Endothelial cell of umbilical vein (primary cell): ENCODE measurements at regions of chr5 and their contacts with region 1.

Region 1: GRCh38 chr5:57137401-57137800 is 36.5 kb upstream of the GPBP1 start:
- DNase-seq: no peak
- H3K4me3 ChIP-seq: no peak overlapping the region
- H3K27ac ChIP-seq: no peak overlapping the region
- H3K4me1 ChIP-seq: no peaks in the 10 kb centered on the region
- H3K27me3 ChIP-seq: no peaks in the 10 kb centered on the region
- CTCF ChIP-seq: no peak
- POLR2A ChIP-seq: no peak

Region 2: GRCh38 chr5:56900858-56901578 is 236.4 kb before region 1 on chr5:
- CTCF ChIA-PET with region 1: interaction called, 74 read pairs
- POLR2A ChIA-PET with region 1: no interaction called
- dilution Hi-C with region 1: no loop called
- intact Hi-C with region 1: loop called (anchors 1 kb)
- DNase-seq: peak; percentile 57
- H3K4me3 ChIP-seq: no peak overlapping the region
- H3K27ac ChIP-seq: no peak overlapping the region
- H3K4me1 ChIP-seq: peaks cover 5% of the 10 kb centered on the region
- H3K27me3 ChIP-seq: peaks cover 3 to 6% of the 10 kb centered on the region in 2 experiments
- CTCF ChIP-seq: peak; percentile 53 to 57
- POLR2A ChIP-seq: no peak

Region 3: GRCh38 chr5:56951946-56952691 is 185.3 kb before region 1 on chr5 and contains the start of gene MIER3:
- CTCF ChIA-PET with region 1: interaction called, 14 read pairs
- POLR2A ChIA-PET with region 1: no interaction called
- dilution Hi-C with region 1: no loop called
- intact Hi-C with region 1: no loop called
- DNase-seq: peak; percentile 71
- H3K4me3 ChIP-seq: peak within 1 kb of the TSS; percentile 72 to 82 (median 77)
- H3K27ac ChIP-seq: peak within 1 kb of the TSS; percentile 49
- H3K4me1 ChIP-seq: peaks cover 12% of the 10 kb centered on the region
- H3K27me3 ChIP-seq: peaks cover 15 to 24% of the 10 kb centered on the region in 2 experiments
- CTCF ChIP-seq: no peak
- POLR2A ChIP-seq: no peak
- total RNA-seq, gene MIER3: 20.5 and 21.9 TPM in 2 replicates

Region 4: GRCh38 chr5:57221049-57221568 is 83.7 kb after region 1 on chr5:
- CTCF ChIA-PET with region 1: interaction called, 22 read pairs
- POLR2A ChIA-PET with region 1: no interaction called
- dilution Hi-C with region 1: no loop called
- intact Hi-C with region 1: loop called (anchors 1 kb)
- DNase-seq: peak; percentile 83
- H3K4me3 ChIP-seq: no peak overlapping the region
- H3K27ac ChIP-seq: no peak overlapping the region
- H3K4me1 ChIP-seq: peaks cover 3% of the 10 kb centered on the region
- H3K27me3 ChIP-seq: no peaks in the 10 kb centered on the region
- CTCF ChIP-seq: peak; percentile 38 to 45
- POLR2A ChIP-seq: no peak

Region 5: DNA sequence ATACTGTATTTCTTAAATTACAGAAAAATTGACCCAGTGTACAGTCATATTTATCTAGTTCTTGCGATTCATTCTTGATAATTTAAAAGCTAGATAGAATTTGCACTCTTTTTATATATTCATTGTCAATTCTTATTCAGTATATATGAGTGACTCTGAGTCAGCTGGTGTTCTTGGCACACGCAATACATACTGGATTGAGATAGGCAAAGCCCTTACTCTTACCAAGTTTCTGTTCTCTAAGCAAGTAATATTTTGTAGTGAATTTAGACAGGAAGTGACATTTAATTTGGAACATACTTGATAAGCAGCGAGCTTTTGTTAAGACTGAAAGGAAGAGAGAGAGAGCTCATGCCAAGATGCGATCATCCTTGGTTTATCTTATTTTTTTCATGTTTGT is 94.2 kb after region 1 on chr5:
- CTCF ChIA-PET with region 1: interaction called, 11 read pairs
- POLR2A ChIA-PET with region 1: no interaction called
- dilution Hi-C with region 1: no loop called
- intact Hi-C with region 1: no loop called
- DNase-seq: peak; percentile 37
- H3K4me3 ChIP-seq: no peak overlapping the region
- H3K27ac ChIP-seq: peak overlapping the region; percentile 40
- H3K4me1 ChIP-seq: peaks cover 10% of the 10 kb centered on the region
- H3K27me3 ChIP-seq: no peaks in the 10 kb centered on the region
- CTCF ChIP-seq: no peak
- POLR2A ChIP-seq: no peak

Region 6: DNA sequence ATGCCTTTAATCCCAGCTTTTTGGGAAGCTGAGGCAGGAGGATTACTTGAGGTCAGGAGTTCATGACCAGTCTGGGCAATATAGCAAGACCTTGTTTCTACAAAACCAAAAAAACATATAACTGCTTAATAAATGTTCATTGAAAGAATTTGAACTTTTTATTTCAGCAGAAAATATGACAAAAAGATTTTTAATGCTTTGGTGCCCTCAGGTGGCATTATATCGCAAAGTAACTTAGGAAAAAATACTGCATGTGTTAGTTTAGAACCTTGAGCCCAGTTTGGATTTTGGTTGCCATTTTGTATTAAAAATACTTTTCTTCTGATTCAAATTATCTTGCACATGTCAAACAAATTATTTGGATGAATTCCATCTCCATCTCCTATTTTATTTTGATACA is 139.7 kb after region 1 on chr5:
- CTCF ChIA-PET with region 1: interaction called, 3 read pairs
- POLR2A ChIA-PET with region 1: no interaction called
- dilution Hi-C with region 1: no loop called
- intact Hi-C with region 1: loop called (anchors 5 kb)
- DNase-seq: peak; percentile 54
- H3K4me3 ChIP-seq: no peak overlapping the region
- H3K27ac ChIP-seq: no peak overlapping the region
- H3K4me1 ChIP-seq: no peaks in the 10 kb centered on the region
- H3K27me3 ChIP-seq: peaks cover 0 to 3% of the 10 kb centered on the region in 2 experiments
- CTCF ChIP-seq: peak; percentile 11 to 18
- POLR2A ChIP-seq: no peak